ENCODE measurements at regions of chrX and their contacts with region 1.

Region 1: GRCh38 chrX:21741869-21742701 is 15.8 kb downstream of the SMPX start:
- DNase-seq: no peak

Region 2: GRCh38 chrX:20101934-20102581 is 1640.0 kb before region 1 on chrX:
- CTCF ChIA-PET with region 1: interaction called, 13 read pairs
- POLR2A ChIA-PET with region 1: no interaction called
- DNase-seq: no peak

Region 3: DNA sequence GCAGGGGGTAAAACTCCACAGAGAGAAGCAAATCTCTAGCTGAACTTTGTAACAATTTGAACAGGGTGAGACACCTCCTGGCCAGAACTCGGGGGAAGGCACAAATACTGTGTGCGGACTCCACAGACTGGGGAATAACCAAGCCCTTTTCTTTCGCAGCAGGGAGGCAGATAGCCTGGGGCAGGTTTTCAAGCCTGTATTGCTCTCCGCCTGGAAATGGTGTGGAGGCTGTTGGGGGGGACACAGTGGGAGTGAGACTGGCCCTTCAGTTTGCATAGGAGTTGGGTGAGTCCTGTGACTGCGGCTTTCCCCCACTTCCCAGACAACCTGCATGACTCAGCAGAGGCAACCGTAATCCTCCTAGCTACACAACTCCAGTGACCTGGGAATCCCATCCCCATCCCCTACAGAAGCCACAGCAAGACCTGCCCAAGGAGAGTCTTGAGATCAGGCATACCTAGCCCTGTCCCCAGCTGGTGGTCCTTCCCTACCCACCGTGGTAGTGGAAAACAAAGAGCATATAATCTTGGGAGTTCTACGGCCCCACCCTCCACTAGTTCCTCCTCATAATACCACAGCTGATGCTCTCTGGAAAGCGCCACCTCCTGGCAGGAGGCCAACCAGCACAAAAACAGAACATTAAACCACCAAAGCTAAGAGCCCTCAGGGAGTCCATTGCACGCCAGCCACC is 28.7 kb after region 1 on chrX:
- CTCF ChIA-PET with region 1: no interaction called
- POLR2A ChIA-PET with region 1: no interaction called
- DNase-seq: no peak

Measured in HEK293T (cell line).